WTC11 (cell line): ENCODE measurements at regions of chr2 and their contacts with region 1.

Region 1: DNA sequence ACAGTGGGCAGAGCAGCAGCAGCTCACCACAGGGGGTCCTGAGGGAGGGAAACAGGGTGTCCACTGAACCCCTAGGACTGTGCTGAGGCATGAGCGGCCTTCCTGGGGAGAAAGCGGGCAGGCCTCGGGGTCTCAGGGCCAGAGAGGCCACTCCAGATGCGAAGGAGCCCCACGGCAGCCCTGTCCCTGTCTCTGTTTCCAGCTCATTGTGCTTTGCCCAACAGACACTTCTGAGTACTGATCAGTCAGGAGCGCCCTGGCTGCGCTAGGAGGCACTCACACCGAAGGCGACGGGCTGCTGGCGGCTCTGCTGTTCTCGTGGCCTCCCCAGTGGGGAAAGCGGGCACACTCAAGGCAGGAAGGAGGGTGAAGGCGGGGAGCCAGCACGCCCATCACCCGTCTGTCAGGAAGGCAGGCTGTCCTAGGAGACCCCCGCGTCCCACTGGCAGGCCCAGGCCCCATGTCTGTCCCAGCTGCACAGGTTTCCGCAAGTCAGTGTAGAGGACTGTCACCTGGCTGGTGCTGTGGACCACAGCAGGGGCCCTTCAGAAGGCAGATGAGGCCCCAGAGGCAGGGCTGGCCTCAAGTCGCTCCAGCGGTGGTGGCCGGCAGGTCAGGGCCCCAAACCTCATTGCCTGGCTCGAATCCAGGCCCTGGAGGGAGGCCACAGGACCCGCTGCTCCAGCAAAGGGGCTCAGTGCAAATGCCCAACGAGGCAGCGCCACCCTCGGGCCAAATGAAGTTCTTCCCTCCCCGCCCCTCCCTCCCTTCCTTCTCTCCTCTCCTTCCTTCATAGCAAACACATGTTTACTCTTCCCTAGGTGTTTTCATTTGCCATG is 6.8 kb downstream of the ESPNL start:
- DNase-seq: peak; percentile 73
- ATAC-seq: peak; percentile 43
- H3K4me3 Mint-ChIP-seq: no peak overlapping the region
- H3K27ac Mint-ChIP-seq: no peak overlapping the region
- H3K4me1 Mint-ChIP-seq: peaks cover 21% of the 10 kb centered on the region
- H3K27me3 Mint-ChIP-seq: no peaks in the 10 kb centered on the region
- CTCF ChIP-seq: peak; percentile 23; the same call in 1 of the 2 replicates

Region 2: DNA sequence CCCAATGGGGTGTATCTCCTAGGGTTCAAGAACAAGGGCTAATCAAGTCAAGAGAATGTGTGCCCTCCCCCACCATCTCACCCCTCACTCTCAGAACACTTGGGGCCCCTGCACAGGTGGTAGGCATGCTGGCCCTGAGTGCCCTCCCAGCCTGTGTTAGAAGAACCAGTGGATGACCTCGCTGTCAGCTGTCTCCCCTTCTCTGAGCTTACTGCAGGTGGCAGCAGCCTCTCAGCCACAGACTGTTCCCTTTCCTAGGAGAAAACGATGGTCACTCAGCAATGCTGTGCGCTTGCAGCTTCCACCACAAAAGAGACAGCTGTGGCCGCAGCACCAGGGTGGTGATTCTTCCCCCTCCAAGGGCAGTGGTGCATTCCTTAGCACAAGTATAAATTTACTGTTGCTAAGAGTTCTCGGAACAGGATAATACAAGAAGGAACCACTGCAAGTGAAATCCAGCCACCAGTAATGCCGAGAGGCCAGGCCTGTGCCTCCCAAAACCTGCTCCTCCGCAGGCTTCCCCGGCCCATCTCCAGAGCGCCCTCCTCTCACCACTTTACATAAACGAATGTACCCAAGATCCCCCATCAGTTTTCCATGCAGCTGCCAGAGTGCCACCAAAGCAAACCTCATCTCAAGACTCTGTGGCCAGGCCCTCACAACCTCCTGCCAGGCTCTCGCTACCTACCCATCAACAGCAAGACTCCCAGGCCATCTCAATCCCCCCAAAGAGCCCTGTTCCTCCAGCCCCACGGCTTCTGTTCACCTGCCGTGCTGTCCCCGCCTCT is 248.4 kb before region 1 on chr2:
- CTCF ChIA-PET with region 1: interaction called, 13 read pairs
- POLR2A ChIA-PET with region 1: no interaction called
- DNase-seq: peak; percentile 71
- ATAC-seq: peak; percentile 86
- H3K4me3 Mint-ChIP-seq: peak overlapping the region; percentile 68
- H3K27ac Mint-ChIP-seq: no peak overlapping the region
- H3K4me1 Mint-ChIP-seq: peaks cover 14% of the 10 kb centered on the region
- H3K27me3 Mint-ChIP-seq: peaks cover 60% of the 10 kb centered on the region
- CTCF ChIP-seq: peak; percentile 44

Region 3: GRCh38 chr2:238120463-238121298 is 13.8 kb after region 1 on chr2:
- CTCF ChIA-PET with region 1: interaction called, 15 read pairs
- POLR2A ChIA-PET with region 1: no interaction called
- DNase-seq: peak; percentile 49
- ATAC-seq: peak; percentile 75
- H3K4me3 Mint-ChIP-seq: no peak overlapping the region
- H3K27ac Mint-ChIP-seq: no peak overlapping the region
- H3K4me1 Mint-ChIP-seq: no peaks in the 10 kb centered on the region
- H3K27me3 Mint-ChIP-seq: no peaks in the 10 kb centered on the region
- CTCF ChIP-seq: no peak

Region 4: DNA sequence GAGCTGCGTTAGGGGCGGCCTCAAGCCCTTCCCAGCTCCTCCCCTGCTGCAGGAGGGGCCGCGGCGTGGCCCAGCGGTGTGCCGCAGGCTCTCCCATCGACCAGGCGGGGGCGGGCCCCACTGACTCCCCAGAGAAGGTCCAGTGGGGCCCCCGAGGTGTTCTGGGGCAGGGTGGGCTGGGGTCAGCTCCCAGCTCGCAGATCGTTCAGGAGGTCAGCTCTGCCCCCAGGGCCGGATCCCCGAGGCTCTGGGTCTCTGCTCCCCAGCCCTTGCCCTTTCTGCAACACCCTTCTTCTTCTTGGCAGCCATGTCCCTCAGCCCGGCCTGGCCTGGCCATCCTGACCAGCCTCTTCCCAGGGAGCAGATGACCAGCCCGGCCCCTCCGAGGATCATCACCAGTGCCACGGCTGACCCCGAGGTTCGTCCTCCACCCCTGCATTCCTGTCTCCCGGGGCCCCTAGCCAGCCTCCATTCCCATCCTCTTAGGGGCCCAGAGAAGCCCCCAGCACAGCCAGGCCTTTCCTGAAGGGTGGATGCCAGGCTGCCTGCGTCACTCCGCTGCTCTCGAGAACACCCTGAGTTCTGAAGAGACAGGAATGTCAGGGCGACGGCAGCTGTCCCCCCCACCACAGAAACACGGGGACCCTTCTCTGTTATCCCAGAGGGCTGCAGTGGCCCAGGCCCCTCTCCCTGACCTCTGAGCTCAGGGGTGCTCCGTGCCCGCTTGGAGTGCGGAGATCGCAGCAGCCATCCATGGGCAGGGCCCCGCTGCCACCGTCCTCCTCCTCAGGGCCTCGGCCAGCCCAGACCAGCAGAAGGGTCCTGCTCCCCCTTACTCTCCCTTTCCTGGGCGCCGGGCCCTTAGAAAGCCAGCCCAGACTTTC is 20.7 kb after region 1 on chr2:
- CTCF ChIA-PET with region 1: interaction called, 10 read pairs
- POLR2A ChIA-PET with region 1: no interaction called
- DNase-seq: no peak
- ATAC-seq: peak; percentile 46
- H3K4me3 Mint-ChIP-seq: no peak overlapping the region
- H3K27ac Mint-ChIP-seq: no peak overlapping the region
- H3K4me1 Mint-ChIP-seq: no peaks in the 10 kb centered on the region
- H3K27me3 Mint-ChIP-seq: no peaks in the 10 kb centered on the region
- CTCF ChIP-seq: no peak

Region 5: DNA sequence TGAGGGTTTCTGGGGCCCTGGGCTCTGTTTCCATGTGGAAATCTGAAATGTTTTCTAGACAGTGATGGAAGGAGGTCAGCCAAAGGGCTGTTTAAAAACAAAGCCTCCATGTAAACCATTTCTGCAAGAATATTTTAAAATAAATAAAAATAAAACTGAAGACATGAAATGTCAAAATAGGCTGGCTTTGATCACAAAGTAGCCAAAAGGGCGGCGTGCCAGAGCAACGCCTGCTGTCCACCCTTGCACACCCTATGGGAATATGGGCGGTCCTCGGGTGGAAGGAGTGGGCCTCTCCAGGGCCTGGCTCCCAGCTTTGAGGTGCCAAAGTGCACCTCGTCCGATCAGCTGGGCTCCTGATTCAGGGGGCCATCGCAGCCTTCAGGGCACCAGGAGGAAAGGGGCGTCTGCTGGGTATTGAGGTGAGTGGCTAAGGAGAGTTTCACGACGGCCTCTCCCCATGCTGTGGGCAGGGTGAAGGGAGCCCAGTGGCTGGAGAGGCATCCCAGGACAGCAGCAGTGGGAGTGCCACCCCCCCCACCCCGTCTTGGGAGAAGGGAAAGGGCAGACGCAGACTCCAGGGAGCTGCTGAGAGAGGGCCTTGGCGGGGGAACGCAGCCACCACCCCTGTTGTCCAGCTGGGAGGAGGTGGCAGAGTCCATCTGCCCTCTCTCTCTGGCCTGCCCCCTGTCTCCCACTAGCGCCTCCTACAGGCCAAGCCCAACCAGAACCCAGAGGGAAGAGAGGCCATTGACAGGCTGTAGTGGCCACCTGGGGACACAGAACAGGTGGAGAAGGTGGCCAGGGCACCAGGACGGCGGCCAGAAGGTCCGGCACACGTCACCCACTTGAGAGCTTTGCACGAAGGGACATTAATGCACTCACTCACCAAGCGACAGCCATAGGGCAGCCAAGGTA is 46.1 kb after region 1 on chr2:
- CTCF ChIA-PET with region 1: interaction called, 11 read pairs
- POLR2A ChIA-PET with region 1: no interaction called
- DNase-seq: peak; percentile 64
- ATAC-seq: no peak
- H3K4me3 Mint-ChIP-seq: no peak overlapping the region
- H3K27ac Mint-ChIP-seq: no peak overlapping the region
- H3K4me1 Mint-ChIP-seq: 0 out of 2 replicates have a peak, but pooled peaks cover 10% of the 10 kb centered on the region
- H3K27me3 Mint-ChIP-seq: peaks cover 8% of the 10 kb centered on the region
- CTCF ChIP-seq: peak; percentile 32; the same call in 1 of the 2 replicates